Stomach (tissue), 19 donors: ENCODE measurements at regions of chr9 and their contacts with region 1.

Region 1: GRCh38 chr9:133199648-133200321 is 9.3 kb downstream of the OBP2B start:
- DNase-seq: peak in 1 of 2 donors; percentile 73
- H3K4me3 ChIP-seq: peak overlapping the region; percentile 18 to 37 (median 24)
- H3K27ac ChIP-seq: no peak overlapping the region
- H3K4me1 ChIP-seq: peaks cover 0 to 5% (median 0%) of the 10 kb centered on the region in 4 donors
- H3K27me3 ChIP-seq: peaks cover 0 to 70% (median 6%) of the 10 kb centered on the region in 3 donors
- CTCF ChIP-seq: no peak
- EP300 ChIP-seq: no peak
- POLR2A ChIP-seq: no peak

Region 2: GRCh38 chr9:133269537-133270362 is 70.0 kb after region 1 on chr9:
- intact Hi-C with region 1: loop called (anchors 10 kb)
- DNase-seq: no peak
- H3K4me3 ChIP-seq: no peak overlapping the region
- H3K27ac ChIP-seq: no peak overlapping the region
- H3K4me1 ChIP-seq: peaks cover 0 to 6% (median 4%) of the 10 kb centered on the region in 4 donors
- H3K27me3 ChIP-seq: peaks cover 0 to 38% (median 6%) of the 10 kb centered on the region in 3 donors
- CTCF ChIP-seq: no peak
- EP300 ChIP-seq: no peak
- POLR2A ChIP-seq: no peak

Region 3: GRCh38 chr9:133282464-133283238 is 82.9 kb after region 1 on chr9:
- intact Hi-C with region 1: no loop called
- DNase-seq: peak; percentile 14 to 25
- H3K4me3 ChIP-seq: no peak overlapping the region
- H3K27ac ChIP-seq: no peak overlapping the region
- H3K4me1 ChIP-seq: no peaks in the 10 kb centered on the region
- H3K27me3 ChIP-seq: peaks cover 0 to 40% (median 7%) of the 10 kb centered on the region in 3 donors
- CTCF ChIP-seq: no peak
- EP300 ChIP-seq: no peak
- POLR2A ChIP-seq: no peak

Region 4: GRCh38 chr9:133429641-133430161 is 229.9 kb after region 1 on chr9:
- intact Hi-C with region 1: no loop called
- DNase-seq: peak; percentile 65 to 83
- H3K4me3 ChIP-seq: no peak overlapping the region
- H3K27ac ChIP-seq: no peak overlapping the region
- H3K4me1 ChIP-seq: peaks cover 16 to 33% (median 28%) of the 10 kb centered on the region in 4 donors
- H3K27me3 ChIP-seq: peaks cover 0 to 46% (median 11%) of the 10 kb centered on the region in 3 donors
- CTCF ChIP-seq: peak in 5 of 7 experiments; percentile 19 to 53 (median 42)
- EP300 ChIP-seq: no peak
- POLR2A ChIP-seq: no peak